A549 (cell line): ENCODE measurements at regions of chr5 and their contacts with region 1.

Region 1: GRCh38 chr5:75331095-75332090 is 5.6 kb upstream of the HMGCR start:
- DNase-seq: peak in 1 of 2 experiments; percentile 23
- ATAC-seq: no peak
- H3K4me3 ChIP-seq: no peak overlapping the region
- H3K27ac ChIP-seq: no peak overlapping the region
- H3K4me1 ChIP-seq: peaks cover 8% of the 10 kb centered on the region; the same call in 1 of the 3 replicates
- CTCF ChIP-seq: no peak
- EP300 ChIP-seq: no peak
- POLR2A ChIP-seq: no peak
- RAD21 ChIP-seq: no peak

Region 2: DNA sequence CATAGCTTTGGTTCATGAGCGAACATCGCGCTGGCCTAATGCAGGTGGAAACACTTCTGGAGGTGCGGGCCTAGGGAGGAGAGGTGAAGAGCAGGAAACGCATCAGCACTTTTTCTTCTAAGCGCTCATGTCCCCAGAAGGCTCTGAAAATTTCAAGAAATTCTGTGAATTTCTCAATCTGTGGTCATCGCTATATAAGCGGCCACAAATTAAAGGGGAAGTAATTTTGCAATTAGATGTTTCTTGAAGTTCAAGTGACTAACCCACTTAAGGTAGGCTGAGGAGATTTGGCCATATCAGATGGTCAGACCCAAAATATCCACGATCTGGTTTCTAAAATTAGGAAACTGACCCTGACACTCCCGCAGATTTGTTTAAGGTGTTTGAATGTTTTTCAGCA is 11.1 kb before region 1 on chr5:
- CTCF ChIA-PET with region 1: interaction called, 18 read pairs
- POLR2A ChIA-PET with region 1: interaction called, 34 read pairs
- DNase-seq: no peak
- ATAC-seq: no peak
- H3K4me3 ChIP-seq: peak overlapping the region; percentile 8; the same call in 1 of the 3 replicates
- H3K27ac ChIP-seq: peak overlapping the region; percentile 82 to 90
- H3K4me1 ChIP-seq: peaks cover 41% of the 10 kb centered on the region
- CTCF ChIP-seq: no peak
- EP300 ChIP-seq: no peak
- POLR2A ChIP-seq: no peak
- RAD21 ChIP-seq: no peak